Vagina (tissue), 2 donors: ENCODE measurements at regions of chr11 and their contacts with region 1.

Region 1: DNA sequence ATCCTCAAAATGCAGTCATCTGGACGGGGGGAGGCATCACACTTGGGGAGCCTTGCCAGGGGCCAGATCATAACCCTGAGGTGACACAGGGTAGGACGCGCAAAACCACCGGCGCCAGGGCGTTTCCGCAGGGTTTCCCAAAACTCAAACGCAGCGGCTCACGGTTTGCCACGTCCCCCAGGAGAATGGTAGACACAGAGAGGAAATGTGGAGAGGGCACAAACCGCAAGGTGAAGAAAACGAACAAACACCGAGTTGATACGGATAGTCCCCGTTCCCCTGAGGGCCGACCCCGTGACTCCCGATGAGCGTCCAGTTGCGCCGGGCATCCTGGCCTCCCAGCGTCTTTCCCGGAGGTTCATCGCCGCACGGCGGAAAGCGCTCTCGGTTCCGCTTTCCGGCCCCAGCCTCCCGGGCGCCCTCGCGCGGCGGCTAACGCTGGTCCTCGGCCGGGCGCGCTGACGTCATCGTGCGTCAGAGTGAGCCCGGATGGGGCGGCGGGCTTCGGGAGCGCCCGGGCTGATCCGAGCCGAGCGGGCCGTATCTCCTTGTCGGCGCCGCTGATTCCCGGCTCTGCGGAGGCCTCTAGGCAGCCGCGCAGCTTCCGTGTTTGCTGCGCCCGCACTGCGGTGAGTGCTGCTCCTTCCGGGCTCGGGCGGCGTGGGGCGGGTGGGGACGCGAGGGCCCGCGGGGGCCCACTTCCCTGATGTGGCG is at the start of gene BIRC2:
- DNase-seq: peak; percentile 90 to 97
- H3K4me3 ChIP-seq: peak within 1 kb of the TSS; percentile 72 to 83
- H3K27ac ChIP-seq: peak within 1 kb of the TSS; percentile 98
- H3K4me1 ChIP-seq: peaks cover 37% of the 10 kb centered on the region
- H3K27me3 ChIP-seq: no peaks in the 10 kb centered on the region
- CTCF ChIP-seq: peak; percentile 28 to 79 (median 78)
- POLR2A ChIP-seq: peak in 1 of 2 donors; percentile 91
- total RNA-seq, gene BIRC2: 52.1 TPM

Region 2: GRCh38 chr11:102293873-102294601 is 52.9 kb before region 1 on chr11:
- intact Hi-C with region 1: loop called (anchors 10 kb)
- DNase-seq: no peak
- H3K4me3 ChIP-seq: no peak overlapping the region
- H3K27ac ChIP-seq: no peak overlapping the region
- H3K4me1 ChIP-seq: no peaks in the 10 kb centered on the region
- H3K27me3 ChIP-seq: no peaks in the 10 kb centered on the region
- CTCF ChIP-seq: peak; percentile 30 to 58 (median 39)
- POLR2A ChIP-seq: no peak

Region 3: GRCh38 chr11:102451681-102452460 is 105.0 kb after region 1 on chr11:
- intact Hi-C with region 1: loop called (anchors 5 kb)
- DNase-seq: no peak
- H3K4me3 ChIP-seq: peak overlapping the region; percentile 94
- H3K27ac ChIP-seq: peak overlapping the region; percentile 91
- H3K4me1 ChIP-seq: peaks cover 61% of the 10 kb centered on the region
- H3K27me3 ChIP-seq: no peaks in the 10 kb centered on the region
- CTCF ChIP-seq: peak in 1 of 3 experiments; percentile 39
- POLR2A ChIP-seq: no peak